Activated B cell treated with CpG ODN at 0.5 μM for 24 hours (primary cell): ENCODE measurements at regions of chr20 and their contacts with region 1.

Region 1: DNA sequence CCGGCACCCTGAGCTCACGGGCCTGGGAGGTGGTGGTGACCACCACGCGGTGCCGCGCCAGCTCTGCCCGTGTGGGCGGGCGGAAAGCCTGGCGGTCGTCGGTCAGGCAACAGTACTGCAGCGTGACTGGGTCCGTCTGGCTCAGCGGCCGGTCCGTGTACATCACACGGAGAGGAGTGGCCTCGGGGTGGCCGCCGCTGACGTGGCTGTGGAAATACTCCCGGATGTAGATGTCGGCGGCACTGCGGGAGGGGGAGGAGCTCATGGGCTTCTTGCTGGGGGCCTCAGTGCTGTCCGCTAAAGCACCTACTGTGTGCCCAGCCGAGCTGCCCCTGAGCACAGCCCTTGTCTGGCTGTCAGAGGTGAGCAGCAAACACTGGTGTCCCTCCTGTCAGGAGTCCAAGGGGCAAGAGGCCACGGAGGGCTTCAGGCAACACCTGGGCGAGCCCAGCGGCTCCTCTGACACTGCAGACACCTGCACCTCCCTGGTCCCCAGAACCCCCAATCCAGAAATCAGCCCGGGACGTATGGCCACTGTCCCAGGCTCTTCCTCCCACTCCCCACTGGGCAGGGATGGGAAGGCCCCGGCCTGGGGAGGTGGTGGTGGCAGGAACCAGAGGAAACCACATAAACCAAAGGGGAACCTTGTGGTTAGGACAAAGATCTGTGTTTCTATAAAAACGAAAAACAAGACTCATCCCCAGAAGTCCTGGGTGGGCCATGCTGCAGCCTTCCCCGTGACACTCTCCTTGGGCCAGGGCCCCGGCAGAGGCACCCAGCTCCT is 6.5 kb downstream of the HELZ2 start:
- DNase-seq: peak; percentile 62
- ATAC-seq: peak; percentile 76
- H3K4me3 Mint-ChIP-seq: peak overlapping the region; percentile 68
- H3K27ac Mint-ChIP-seq: peak overlapping the region; percentile 75
- H3K4me1 Mint-ChIP-seq: peaks cover 31% of the 10 kb centered on the region
- H3K27me3 Mint-ChIP-seq: no peaks in the 10 kb centered on the region
- CTCF ChIP-seq: no peak

Region 2: DNA sequence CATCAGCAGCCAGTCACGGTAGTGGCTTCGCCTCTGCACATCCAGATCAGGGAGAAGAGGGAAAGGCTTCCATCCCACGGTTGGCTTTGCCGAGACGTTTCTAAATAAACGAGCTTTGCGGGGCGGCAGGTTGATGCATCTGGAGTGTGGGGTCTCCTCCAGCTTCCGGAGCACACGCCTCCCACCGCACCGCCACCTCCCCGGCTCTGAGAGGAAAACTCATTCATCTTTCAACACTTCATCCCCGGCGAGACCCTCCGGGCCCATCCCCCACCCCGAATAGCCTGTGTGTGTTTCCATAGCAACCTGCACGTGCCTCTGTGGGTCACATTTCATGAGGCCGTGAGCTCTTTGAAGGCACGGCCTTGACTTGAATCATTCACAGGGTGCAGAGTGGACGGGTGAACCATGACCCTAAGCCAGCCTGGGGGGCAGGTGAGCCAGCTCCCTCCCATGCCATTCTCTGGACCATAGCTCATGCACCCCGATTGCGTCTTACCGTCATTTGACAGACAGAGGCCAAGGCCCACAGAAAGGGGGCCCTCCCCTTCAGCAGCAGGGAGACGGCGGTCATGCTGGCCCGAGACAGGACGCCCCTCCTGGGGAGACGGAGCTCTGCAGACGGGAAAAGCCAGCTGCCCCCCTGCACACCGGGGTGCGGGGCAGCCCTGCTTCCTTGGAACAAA is 190.2 kb before region 1 on chr20:
- CTCF ChIA-PET with region 1: no interaction called
- POLR2A ChIA-PET with region 1: no interaction called
- intact Hi-C with region 1: no loop called
- DNase-seq: no peak
- ATAC-seq: no peak
- H3K4me3 Mint-ChIP-seq: no peak overlapping the region
- H3K27ac Mint-ChIP-seq: no peak overlapping the region
- H3K4me1 Mint-ChIP-seq: no peaks in the 10 kb centered on the region
- H3K27me3 Mint-ChIP-seq: peaks cover 24% of the 10 kb centered on the region
- CTCF ChIP-seq: no peak

Region 3: DNA sequence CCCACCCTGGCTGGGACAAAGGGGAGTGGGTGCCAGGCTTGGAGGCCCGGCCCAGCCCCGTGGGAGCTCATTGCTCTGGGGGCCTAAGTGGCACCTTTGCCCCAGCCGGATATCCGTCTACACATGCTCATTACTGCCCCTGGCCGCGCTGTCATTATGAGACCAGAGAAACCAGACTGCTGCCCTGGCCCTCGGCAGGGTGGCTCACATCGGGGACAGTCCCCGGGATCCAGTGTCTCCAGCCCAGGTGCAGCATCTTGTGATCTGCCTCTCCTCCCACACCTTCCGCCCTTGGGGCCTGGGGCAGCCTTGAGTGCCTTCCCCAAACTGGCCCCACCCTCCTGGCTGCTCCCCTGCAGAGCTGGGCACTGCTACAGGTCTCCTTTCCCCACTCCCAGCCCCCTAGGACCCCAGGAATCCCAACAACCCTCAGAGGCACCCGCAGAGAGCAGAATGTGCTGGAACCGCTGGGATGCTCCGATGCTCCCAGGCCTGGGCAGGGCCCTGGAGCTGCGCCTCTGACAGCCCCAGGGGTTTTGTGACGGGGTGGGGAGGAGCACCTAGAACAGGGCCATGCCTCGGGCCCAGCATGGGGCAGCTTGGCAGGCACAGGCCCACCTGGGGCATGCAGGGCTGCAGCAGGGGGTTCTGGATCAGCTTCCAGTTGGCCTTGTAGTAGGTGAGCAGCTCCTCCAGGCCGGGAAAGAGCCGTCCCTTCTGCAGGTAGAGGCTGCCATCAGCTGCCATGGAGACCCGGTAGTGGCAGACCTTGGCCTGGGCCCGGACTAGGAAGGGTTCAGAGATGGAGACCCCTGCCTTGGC is 24.7 kb before region 1 on chr20:
- CTCF ChIA-PET with region 1: interaction called, 6 read pairs
- POLR2A ChIA-PET with region 1: interaction called, 23 read pairs
- intact Hi-C with region 1: loop called (anchors 1 kb)
- DNase-seq: peak; percentile 51
- ATAC-seq: peak; percentile 37
- H3K4me3 Mint-ChIP-seq: peak overlapping the region; percentile 53
- H3K27ac Mint-ChIP-seq: peak overlapping the region; percentile 72
- H3K4me1 Mint-ChIP-seq: peaks cover 49% of the 10 kb centered on the region
- H3K27me3 Mint-ChIP-seq: no peaks in the 10 kb centered on the region
- CTCF ChIP-seq: no peak

Region 4: DNA sequence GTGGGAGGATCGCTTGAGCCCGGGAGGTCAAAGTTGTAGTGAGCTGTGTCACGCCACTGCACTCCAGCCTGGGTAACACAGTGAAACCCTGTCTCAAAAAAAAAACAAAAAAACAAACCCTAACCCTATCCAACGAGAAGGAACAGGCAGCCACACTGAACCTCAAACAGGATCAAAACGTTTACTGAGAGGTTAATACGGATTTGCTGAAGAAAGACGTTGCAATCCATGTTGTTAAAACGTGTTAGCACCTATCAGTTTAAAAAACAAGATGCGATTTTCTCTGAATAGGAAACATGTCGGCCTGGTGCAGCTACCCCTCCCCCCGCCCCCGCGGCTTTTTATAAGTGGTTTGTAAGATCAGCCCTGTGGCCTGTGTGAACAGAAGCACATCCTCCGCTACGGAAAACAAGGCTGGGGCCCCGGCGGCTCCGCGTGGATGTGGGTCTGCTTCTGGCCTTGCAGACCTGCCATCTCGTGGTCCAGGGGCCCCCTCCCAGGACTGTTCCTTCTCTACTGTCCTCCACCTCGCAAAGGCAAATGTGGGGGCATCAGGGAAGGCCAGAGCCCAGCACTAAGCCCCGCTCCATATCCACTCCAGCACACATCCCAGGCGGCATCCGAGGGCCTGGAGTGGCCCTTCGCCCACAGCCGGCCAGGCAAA is 183.4 kb after region 1 on chr20:
- CTCF ChIA-PET with region 1: no interaction called
- POLR2A ChIA-PET with region 1: no interaction called
- intact Hi-C with region 1: no loop called
- DNase-seq: no peak
- ATAC-seq: no peak
- H3K4me3 Mint-ChIP-seq: no peak overlapping the region
- H3K27ac Mint-ChIP-seq: no peak overlapping the region
- H3K4me1 Mint-ChIP-seq: no peaks in the 10 kb centered on the region
- H3K27me3 Mint-ChIP-seq: no peaks in the 10 kb centered on the region
- CTCF ChIP-seq: no peak